Common myeloid progenitor, CD34-positive (primary cell): ENCODE measurements at regions of chr5 and their contacts with region 1.

Region 1: DNA sequence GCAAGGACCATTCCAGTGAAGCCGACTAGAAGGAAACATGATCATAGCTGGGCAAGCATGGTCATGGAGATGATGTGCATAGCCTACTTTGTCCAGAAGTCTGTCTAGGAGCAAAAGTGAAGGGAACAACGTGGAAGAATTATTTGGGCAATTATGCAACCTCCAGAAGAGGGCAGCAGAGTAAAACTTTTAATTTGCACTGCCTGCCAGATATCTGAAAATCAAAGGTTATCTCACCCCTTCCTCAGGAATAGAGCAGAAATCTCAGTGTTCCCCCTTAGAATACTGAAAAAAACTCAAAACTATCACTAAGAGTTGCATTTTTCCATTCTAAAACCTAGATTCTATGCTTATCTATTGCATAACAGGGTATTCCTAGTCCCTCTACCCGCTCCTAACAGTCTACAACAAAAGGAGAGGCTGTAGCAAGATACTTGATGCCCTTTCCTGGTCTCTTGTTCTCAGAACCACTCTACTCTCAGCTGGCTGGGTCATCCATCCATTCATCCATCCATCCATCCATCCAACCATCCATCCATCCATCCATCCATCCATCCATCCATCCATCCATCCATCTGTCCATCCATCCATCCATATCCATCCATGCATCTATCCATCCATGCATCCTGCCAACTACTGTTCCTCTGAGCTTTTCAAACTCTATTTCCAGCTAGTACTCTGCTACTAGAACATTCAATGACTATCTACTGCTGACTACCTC is 8.4 kb upstream of the SETD9 start:
- DNase-seq: peak; percentile 58 to 70 (median 60)
- H3K4me3 ChIP-seq: no peak overlapping the region
- H3K27ac ChIP-seq: no peak overlapping the region
- H3K4me1 ChIP-seq: peaks cover 0 to 5% (median 2%) of the 10 kb centered on the region in 4 experiments
- H3K27me3 ChIP-seq: no peaks in the 10 kb centered on the region

Region 2: DNA sequence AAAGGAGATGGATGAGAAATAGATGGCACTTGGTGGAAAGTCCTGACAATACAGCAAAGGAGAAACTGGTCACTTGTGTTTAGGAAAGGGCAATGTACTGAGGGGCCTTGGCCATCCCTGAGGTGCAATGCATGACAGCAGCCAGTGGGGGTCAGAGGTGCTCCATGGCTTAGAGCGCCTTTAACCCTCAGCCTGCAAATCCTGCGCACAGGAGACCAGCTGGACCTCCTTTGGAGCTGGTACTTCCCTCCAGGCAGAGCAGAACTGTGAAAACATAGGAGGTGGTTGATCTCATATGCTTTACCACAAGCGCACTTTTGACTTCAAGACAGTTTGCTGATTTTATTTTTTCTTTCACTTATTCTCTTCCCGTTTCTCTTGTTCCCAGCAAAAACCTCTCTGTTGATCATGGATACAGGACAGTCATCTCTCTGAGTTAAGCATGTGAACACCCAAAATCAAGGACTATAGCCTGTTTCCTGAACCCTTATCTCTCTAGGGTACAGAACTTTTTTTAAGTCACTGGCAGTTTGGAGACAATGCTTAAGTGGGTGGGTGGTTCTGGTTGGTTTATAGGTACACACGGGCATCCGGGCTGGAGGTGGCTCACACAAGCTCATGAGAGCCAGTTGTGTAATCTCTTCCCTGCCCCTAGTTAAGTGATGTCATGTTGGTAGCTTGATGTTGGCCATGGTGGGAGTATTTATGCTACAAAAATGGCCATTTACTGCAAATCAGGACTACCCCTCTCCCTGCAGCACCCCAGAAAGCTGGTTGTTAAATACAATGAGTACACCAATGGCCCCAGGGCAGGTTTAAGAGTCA is 630.2 kb before region 1 on chr5:
- CTCF ChIA-PET with region 1: interaction called, 11 read pairs
- POLR2A ChIA-PET with region 1: no interaction called
- DNase-seq: peak; percentile 78 to 88 (median 87)
- H3K4me3 ChIP-seq: no peak overlapping the region
- H3K27ac ChIP-seq: no peak overlapping the region
- H3K4me1 ChIP-seq: peaks cover 0 to 5% (median 0%) of the 10 kb centered on the region in 4 experiments
- H3K27me3 ChIP-seq: no peaks in the 10 kb centered on the region

Region 3: GRCh38 chr5:57082441-57083067 is 181.5 kb after region 1 on chr5:
- CTCF ChIA-PET with region 1: interaction called, 13 read pairs
- POLR2A ChIA-PET with region 1: no interaction called
- DNase-seq: peak; percentile 11 to 42 (median 34)
- H3K4me3 ChIP-seq: no peak overlapping the region
- H3K27ac ChIP-seq: no peak overlapping the region
- H3K4me1 ChIP-seq: no peaks in the 10 kb centered on the region
- H3K27me3 ChIP-seq: no peaks in the 10 kb centered on the region

Region 4: DNA sequence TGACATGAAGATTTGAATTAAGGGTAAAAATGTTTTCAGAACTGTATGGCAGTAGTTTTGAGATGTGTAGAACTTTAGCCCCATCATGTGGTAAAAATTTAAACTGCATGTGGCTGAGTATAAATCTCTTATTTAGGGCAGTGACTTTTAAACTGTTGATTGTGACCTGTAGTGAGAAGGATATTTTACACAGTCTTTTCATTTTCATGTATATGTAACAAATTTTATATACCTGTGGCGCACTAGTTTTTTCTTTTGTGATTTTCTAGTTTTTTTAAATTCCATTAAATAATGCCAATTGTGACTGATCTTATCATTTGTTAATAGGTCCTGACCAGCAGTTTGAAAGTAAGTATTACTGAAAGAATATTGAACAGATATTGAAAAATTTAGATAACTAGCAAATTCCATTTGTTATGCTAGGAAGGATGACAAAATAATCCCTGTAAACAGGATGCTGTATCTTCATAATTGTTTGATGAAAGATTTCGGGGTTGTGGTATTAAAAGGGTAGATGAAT is 320.1 kb after region 1 on chr5:
- CTCF ChIA-PET with region 1: interaction called, 27 read pairs
- POLR2A ChIA-PET with region 1: interaction called, 4 read pairs
- DNase-seq: peak; percentile 76 to 90 (median 82)
- H3K4me3 ChIP-seq: no peak overlapping the region
- H3K27ac ChIP-seq: no peak overlapping the region
- H3K4me1 ChIP-seq: no peaks in the 10 kb centered on the region
- H3K27me3 ChIP-seq: no peaks in the 10 kb centered on the region

Region 5: DNA sequence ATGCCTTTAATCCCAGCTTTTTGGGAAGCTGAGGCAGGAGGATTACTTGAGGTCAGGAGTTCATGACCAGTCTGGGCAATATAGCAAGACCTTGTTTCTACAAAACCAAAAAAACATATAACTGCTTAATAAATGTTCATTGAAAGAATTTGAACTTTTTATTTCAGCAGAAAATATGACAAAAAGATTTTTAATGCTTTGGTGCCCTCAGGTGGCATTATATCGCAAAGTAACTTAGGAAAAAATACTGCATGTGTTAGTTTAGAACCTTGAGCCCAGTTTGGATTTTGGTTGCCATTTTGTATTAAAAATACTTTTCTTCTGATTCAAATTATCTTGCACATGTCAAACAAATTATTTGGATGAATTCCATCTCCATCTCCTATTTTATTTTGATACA is 376.1 kb after region 1 on chr5:
- CTCF ChIA-PET with region 1: interaction called, 10 read pairs
- POLR2A ChIA-PET with region 1: no interaction called
- DNase-seq: peak; percentile 41 to 65 (median 58)
- H3K4me3 ChIP-seq: no peak overlapping the region
- H3K27ac ChIP-seq: no peak overlapping the region
- H3K4me1 ChIP-seq: peaks cover 0 to 3% (median 0%) of the 10 kb centered on the region in 4 experiments
- H3K27me3 ChIP-seq: no peaks in the 10 kb centered on the region